ENCODE measurements at regions of chr5 and their contacts with region 1.

Region 1: GRCh38 chr5:29462241-29462640 is 1731.2 kb upstream of the CDH6 start:
- DNase-seq: no peak
- ATAC-seq: no peak
- H3K4me3 ChIP-seq: no peak overlapping the region
- H3K4me3 Mint-ChIP-seq: no peak overlapping the region
- H3K27ac ChIP-seq: no peak overlapping the region
- H3K27ac Mint-ChIP-seq: no peak overlapping the region
- H3K4me1 ChIP-seq: no peaks in the 10 kb centered on the region
- H3K4me1 Mint-ChIP-seq: no peaks in the 10 kb centered on the region
- H3K27me3 ChIP-seq: no peaks in the 10 kb centered on the region
- H3K27me3 Mint-ChIP-seq: no peaks in the 10 kb centered on the region

Region 2: DNA sequence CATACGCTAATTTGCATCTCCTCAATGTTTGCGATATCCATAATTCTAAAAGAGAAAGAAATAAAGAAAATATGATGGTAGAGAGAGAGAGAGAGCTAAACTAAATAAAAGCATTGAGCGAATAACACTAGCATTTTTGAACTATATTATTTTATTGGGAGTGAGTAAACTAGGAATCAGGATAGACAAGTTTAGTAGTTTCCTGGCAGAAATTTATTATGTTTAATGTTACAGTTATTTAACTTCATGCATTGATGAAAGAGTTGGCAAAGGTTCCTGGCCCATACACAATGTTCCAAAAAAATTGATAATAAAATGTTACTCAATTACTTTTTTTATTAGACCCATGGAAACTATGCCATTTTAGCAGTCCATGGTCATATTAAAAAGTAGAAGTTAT is 23.1 kb after region 1 on chr5:
- CTCF ChIA-PET with region 1: no interaction called
- POLR2A ChIA-PET with region 1: interaction called in 1 of 2 experiments, 10 read pairs
- DNase-seq: no peak
- ATAC-seq: no peak
- H3K4me3 ChIP-seq: no peak overlapping the region
- H3K4me3 Mint-ChIP-seq: no peak overlapping the region
- H3K27ac ChIP-seq: no peak overlapping the region
- H3K27ac Mint-ChIP-seq: no peak overlapping the region
- H3K4me1 ChIP-seq: no peaks in the 10 kb centered on the region
- H3K4me1 Mint-ChIP-seq: no peaks in the 10 kb centered on the region
- H3K27me3 ChIP-seq: no peaks in the 10 kb centered on the region
- H3K27me3 Mint-ChIP-seq: no peaks in the 10 kb centered on the region

Region 3: DNA sequence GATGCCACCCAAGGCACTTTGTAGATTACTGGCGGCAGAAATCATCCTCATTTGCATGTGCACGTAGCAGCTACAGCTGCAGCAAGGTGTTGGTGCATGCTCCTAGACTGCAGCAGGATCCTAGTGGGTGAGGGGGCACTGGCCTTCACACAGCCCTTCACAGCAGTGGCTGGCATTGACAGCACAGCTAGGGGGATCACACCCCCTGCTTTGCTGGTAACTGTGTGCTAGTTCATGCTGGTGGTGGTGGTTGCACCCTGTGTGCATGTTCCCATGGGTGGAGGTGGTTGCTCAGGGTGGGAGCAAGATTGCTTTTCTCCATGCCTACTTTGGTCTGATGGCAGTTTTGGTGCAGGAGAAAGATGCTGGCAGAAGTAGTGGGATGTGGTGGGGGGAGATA is 36.2 kb after region 1 on chr5:
- CTCF ChIA-PET with region 1: no interaction called
- POLR2A ChIA-PET with region 1: no interaction called
- DNase-seq: no peak
- ATAC-seq: no peak
- H3K4me3 ChIP-seq: no peak overlapping the region
- H3K4me3 Mint-ChIP-seq: no peak overlapping the region
- H3K27ac ChIP-seq: no peak overlapping the region
- H3K27ac Mint-ChIP-seq: no peak overlapping the region
- H3K4me1 ChIP-seq: no peaks in the 10 kb centered on the region
- H3K4me1 Mint-ChIP-seq: no peaks in the 10 kb centered on the region
- H3K27me3 ChIP-seq: no peaks in the 10 kb centered on the region
- H3K27me3 Mint-ChIP-seq: no peaks in the 10 kb centered on the region

Region 4: GRCh38 chr5:29939988-29940387 is 477.7 kb after region 1 on chr5:
- CTCF ChIA-PET with region 1: no interaction called
- POLR2A ChIA-PET with region 1: no interaction called
- DNase-seq: no peak
- ATAC-seq: no peak
- H3K4me3 ChIP-seq: no peak overlapping the region
- H3K4me3 Mint-ChIP-seq: no peak overlapping the region
- H3K27ac ChIP-seq: no peak overlapping the region
- H3K27ac Mint-ChIP-seq: no peak overlapping the region
- H3K4me1 ChIP-seq: no peaks in the 10 kb centered on the region
- H3K4me1 Mint-ChIP-seq: no peaks in the 10 kb centered on the region
- H3K27me3 ChIP-seq: no peaks in the 10 kb centered on the region
- H3K27me3 Mint-ChIP-seq: no peaks in the 10 kb centered on the region

Measured in T-cell (primary cell).